ENCODE measurements at regions of chr16 and their contacts with region 1.

Region 1: DNA sequence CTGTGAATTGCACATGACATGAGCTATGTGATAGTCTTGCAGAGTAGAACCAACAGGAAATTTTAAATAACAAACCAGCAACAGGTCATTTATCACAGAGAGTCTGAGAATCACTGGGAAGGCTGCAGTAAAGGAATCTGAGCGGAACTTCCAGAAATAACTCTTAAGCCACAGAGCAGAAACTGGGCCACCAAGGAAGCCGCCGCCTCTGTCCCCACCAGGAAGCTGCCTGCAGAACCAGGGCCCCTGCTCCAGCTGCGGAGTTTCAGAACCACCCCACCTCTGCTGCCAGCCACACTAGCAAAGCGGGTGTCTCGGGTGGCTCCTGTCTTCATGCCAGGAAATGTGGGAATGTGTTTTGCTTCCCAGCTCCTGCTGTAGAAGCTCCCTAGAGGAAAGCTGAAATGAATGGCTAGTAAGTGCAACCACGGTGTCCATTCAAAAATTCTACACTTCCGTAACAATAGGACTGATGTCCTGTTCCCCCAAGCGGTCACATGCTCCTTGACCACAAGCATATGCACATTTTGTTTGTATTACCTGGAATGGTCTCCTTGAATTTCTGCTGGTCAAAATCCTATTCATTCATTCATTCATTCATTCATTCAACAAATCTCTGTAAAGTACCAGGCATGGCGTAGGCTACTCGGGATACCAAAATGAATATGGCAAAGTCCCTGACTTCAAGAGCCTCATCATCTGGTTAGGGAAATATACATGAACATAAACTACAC is 7.7 kb upstream of the ITPRIPL2 start:
- DNase-seq: no peak
- H3K4me3 Mint-ChIP-seq: no peak overlapping the region
- H3K27ac Mint-ChIP-seq: no peak overlapping the region
- H3K4me1 Mint-ChIP-seq: peaks cover 32% of the 10 kb centered on the region
- H3K27me3 Mint-ChIP-seq: no peaks in the 10 kb centered on the region
- CTCF ChIP-seq: no peak

Region 2: GRCh38 chr16:19118938-19119431 is 12.9 kb after region 1 on chr16:
- CTCF ChIA-PET with region 1: interaction called, 11 read pairs
- intact Hi-C with region 1: no loop called
- DNase-seq: peak; percentile 38
- H3K4me3 Mint-ChIP-seq: peak overlapping the region; percentile 64
- H3K27ac Mint-ChIP-seq: peak overlapping the region; percentile 74
- H3K4me1 Mint-ChIP-seq: peaks cover 40% of the 10 kb centered on the region
- H3K27me3 Mint-ChIP-seq: no peaks in the 10 kb centered on the region
- CTCF ChIP-seq: no peak

Region 3: DNA sequence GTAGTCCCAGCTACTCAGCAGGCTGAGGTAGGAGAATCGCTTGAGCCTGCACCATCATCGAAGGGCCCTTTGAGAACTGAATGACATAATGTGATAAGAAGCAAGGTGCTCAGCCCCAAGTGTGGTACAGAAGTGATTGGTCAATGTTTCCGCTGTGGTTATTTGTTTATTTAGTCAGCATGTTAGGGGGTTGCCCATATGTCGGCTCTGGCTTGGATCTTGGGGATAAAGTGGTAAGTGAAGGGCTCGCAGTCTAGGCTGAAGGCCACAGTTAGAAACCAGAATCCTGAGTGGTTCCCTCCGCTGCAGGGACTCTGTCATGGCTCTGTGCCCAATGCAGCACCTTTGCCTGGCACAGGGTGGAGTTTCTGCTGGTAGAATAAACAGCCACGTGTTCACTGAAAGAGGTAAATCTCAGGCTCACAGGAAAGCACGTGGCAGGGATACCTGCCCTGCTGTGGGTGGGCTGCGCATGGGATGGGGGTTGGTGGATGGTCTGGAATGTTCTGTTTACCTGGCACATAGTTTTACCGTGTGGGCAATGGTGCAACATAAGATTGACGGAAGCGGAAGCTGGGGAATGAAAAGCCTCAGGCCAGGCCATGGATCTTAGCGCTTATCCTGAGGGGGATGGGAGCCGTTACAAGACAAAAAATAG is 97.4 kb after region 1 on chr16:
- CTCF ChIA-PET with region 1: no interaction called
- intact Hi-C with region 1: no loop called
- DNase-seq: no peak
- H3K4me3 Mint-ChIP-seq: no peak overlapping the region
- H3K27ac Mint-ChIP-seq: no peak overlapping the region
- H3K4me1 Mint-ChIP-seq: peaks cover 8% of the 10 kb centered on the region
- H3K27me3 Mint-ChIP-seq: no peaks in the 10 kb centered on the region
- CTCF ChIP-seq: no peak

Measured in Calu3 (cell line).